Activated T-helper 2 cell treated with anti-CD3 and anti-CD28 coated beads, Interferon-gamma antibody, Interleukin-2, Interleukin-4, amounts not matched to agents 10 μg/mL and 5 μg/mL and 100 μg/mL, durations not matched to agents 14 hours and 24 hours and 36 hours (primary cell): ENCODE measurements at regions of chr11 and their contacts with region 1.

Region 1: GRCh38 chr11:62645956-62646824 is at the start of gene GANAB:
- DNase-seq: peak; percentile 98
- H3K4me3 Mint-ChIP-seq: peak within 1 kb of the TSS; percentile 98
- H3K27ac Mint-ChIP-seq: peak within 1 kb of the TSS; percentile 97
- H3K4me1 Mint-ChIP-seq: peaks cover 21% of the 10 kb centered on the region
- H3K27me3 Mint-ChIP-seq: no peaks in the 10 kb centered on the region
- total RNA-seq, gene GANAB: 274 and 279 TPM in 2 replicates

Region 2: GRCh38 chr11:62472012-62472884 is 173.9 kb before region 1 on chr11:
- intact Hi-C with region 1: no loop called
- DNase-seq: no peak
- H3K4me3 Mint-ChIP-seq: no peak overlapping the region
- H3K27ac Mint-ChIP-seq: no peak overlapping the region
- H3K4me1 Mint-ChIP-seq: peaks cover 7% of the 10 kb centered on the region
- H3K27me3 Mint-ChIP-seq: no peaks in the 10 kb centered on the region

Region 3: DNA sequence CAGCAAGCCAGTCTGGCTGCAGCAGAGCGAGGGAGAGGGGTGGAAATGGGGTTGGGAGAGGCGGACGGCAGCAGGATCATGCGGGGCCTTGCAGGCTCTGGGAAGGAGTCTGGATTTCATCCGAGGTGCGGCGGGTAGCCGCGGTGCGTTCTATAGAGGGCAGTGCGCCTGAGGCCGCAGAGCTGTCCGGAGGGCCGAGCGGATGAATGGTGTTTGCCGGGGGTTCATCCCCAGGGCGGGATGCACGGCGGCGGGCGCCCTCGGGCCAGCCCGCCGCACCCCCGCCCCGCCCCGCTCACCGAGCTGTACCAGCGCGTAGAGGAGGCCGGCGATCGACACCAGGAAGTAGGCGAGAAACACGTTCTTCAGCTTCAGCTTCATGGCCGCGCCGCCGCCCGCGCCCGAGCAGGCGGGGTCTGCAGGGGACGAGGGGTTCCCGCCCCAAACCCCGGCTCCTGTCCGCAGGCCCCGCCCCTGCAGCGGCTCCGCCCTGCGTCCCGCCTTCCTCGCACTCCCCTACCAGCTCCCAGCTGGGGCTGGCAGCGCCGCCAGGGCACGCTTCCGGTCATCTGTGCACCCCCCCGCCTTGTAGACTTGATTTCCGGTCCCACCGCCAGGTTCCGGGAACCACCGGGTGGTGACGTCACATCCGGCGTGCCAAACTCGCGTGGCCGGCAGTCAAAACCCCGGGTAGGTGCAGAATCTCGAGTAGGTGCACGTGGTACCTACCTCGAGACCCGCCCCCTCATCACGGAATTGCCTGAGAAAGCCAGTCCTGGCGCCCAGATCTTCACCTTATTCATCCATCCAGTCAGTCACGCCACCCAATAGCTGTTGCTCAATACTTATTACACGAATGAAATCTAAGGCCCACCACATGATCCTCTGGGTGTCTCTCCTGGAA is 24.4 kb before region 1 on chr11 and contains the start of gene B3GAT3:
- intact Hi-C with region 1: loop called (anchors 1 kb)
- DNase-seq: peak; percentile 94
- H3K4me3 Mint-ChIP-seq: peak within 1 kb of the TSS; percentile 93
- H3K27ac Mint-ChIP-seq: peak within 1 kb of the TSS; percentile 97
- H3K4me1 Mint-ChIP-seq: peaks cover 16% of the 10 kb centered on the region
- H3K27me3 Mint-ChIP-seq: no peaks in the 10 kb centered on the region
- total RNA-seq, gene B3GAT3: 70.0 and 81.4 TPM in 2 replicates

Region 4: GRCh38 chr11:62632492-62632891 is 13.7 kb before region 1 on chr11:
- intact Hi-C with region 1: no loop called
- DNase-seq: no peak
- H3K4me3 Mint-ChIP-seq: no peak overlapping the region
- H3K27ac Mint-ChIP-seq: no peak overlapping the region
- H3K4me1 Mint-ChIP-seq: peaks cover 8% of the 10 kb centered on the region
- H3K27me3 Mint-ChIP-seq: no peaks in the 10 kb centered on the region

Region 5: DNA sequence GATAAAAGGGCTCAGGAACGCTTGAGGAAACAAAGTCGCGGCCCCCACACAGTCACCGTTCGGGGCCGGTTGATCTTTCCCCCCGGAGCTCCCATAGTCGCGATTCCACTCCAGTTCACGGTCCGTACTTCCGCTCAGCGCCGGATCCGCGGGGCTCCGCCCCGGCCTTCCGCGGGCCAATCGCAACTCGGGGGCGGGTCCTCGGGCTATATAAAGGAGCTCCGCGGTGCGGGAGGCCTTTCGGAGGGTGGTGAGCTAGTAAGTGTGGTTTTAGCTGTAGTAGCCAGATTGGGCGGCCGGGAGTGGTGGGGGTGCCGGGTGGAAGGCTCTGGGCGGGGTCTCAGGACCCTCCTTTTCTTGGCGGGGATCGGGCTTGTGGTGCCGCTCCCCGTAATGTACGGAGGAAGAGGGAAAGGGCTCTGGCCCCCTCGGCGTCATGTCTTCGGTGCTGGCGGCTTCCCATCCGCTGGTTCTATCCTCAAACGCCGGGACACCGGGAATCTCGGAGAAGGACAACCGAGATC is 18.9 kb after region 1 on chr11 and contains the starts of genes C11orf98 and CSKMT:
- intact Hi-C with region 1: loop called (anchors 2 kb)
- DNase-seq: peak; percentile 95
- H3K4me3 Mint-ChIP-seq: peak within 1 kb of the TSS; percentile 97
- H3K27ac Mint-ChIP-seq: peak within 1 kb of the TSS; percentile 78
- H3K4me1 Mint-ChIP-seq: peaks cover 29% of the 10 kb centered on the region
- H3K27me3 Mint-ChIP-seq: no peaks in the 10 kb centered on the region
- total RNA-seq, gene C11orf98: 118 and 130 TPM in 2 replicates
- total RNA-seq, gene CSKMT: 45.4 and 47.2 TPM in 2 replicates

Region 6: GRCh38 chr11:62999649-63000048 is 353.5 kb after region 1 on chr11:
- intact Hi-C with region 1: no loop called
- DNase-seq: no peak
- H3K4me3 Mint-ChIP-seq: no peak overlapping the region
- H3K27ac Mint-ChIP-seq: no peak overlapping the region
- H3K4me1 Mint-ChIP-seq: no peaks in the 10 kb centered on the region
- H3K27me3 Mint-ChIP-seq: peaks cover 12% of the 10 kb centered on the region